ENCODE measurements at regions of chr17 and their contacts with region 1.

Region 1: GRCh38 chr17:1055751-1056645 is 59.1 kb downstream of the TIMM22 start:
- DNase-seq: no peak
- H3K4me3 ChIP-seq: no peak overlapping the region
- H3K27ac ChIP-seq: peak overlapping the region in 2 of 4 donors; percentile 5 to 17
- H3K4me1 ChIP-seq: peaks cover 0 to 12% (median 4%) of the 10 kb centered on the region in 3 donors
- H3K27me3 ChIP-seq: no peaks in the 10 kb centered on the region
- CTCF ChIP-seq: peak; percentile 47 to 71 (median 58)
- POLR2A ChIP-seq: no peak

Region 2: GRCh38 chr17:879549-880442 is 176.2 kb before region 1 on chr17:
- intact Hi-C with region 1: no loop called
- DNase-seq: no peak
- H3K4me3 ChIP-seq: peak overlapping the region in 1 of 4 donors; percentile 15
- H3K27ac ChIP-seq: peak overlapping the region; percentile 66 to 88 (median 86)
- H3K4me1 ChIP-seq: peaks cover 19 to 71% (median 55%) of the 10 kb centered on the region in 3 donors
- H3K27me3 ChIP-seq: no peaks in the 10 kb centered on the region
- CTCF ChIP-seq: peak; percentile 37 to 79 (median 71)
- POLR2A ChIP-seq: no peak

Region 3: GRCh38 chr17:1147661-1148060 is 91.7 kb after region 1 on chr17:
- intact Hi-C with region 1: loop called (anchors 10 kb)
- DNase-seq: no peak
- H3K4me3 ChIP-seq: no peak overlapping the region
- H3K27ac ChIP-seq: no peak overlapping the region
- H3K4me1 ChIP-seq: peaks cover 2 to 19% (median 5%) of the 10 kb centered on the region in 3 donors
- H3K27me3 ChIP-seq: no peaks in the 10 kb centered on the region
- CTCF ChIP-seq: peak in 4 of 6 experiments; percentile 52 to 79 (median 60)
- POLR2A ChIP-seq: no peak

Measured in esophagus squamous epithelium (tissue), 5 donors.